ENCODE measurements at regions of chr22 and their contacts with region 1.

Region 1: DNA sequence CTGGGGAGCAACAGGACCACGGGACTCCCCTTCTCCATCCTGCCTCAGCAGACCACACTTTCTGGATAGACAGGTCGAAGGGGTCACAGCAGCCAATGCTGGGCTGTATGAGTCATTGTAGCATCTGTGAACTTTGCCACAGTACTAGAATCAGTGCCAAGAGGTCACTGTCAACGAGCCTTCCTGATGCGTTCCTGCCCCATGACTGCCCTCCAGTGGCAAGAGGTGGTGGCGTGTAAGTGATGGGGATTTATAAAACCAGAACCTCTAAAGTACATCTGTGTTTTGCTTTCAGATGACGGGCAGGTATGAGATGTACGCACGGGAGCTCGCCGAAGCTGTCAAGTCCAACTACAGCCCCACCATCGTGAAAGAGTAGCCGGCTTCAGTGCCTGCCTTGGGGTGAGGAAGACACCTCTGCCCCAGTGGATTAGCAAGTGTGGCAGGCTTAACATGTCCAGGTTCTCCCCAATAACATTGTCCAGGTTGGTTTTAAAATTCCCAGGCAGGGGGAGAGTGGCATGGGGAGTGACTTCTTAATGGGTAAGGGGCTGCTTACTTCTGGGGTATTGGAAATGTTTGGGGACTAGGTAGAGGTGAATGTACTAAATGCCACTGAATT is 29.4 kb downstream of the GUCD1 start:
- DNase-seq: peak; percentile 76 to 89 (median 84)
- H3K4me3 ChIP-seq: no peak overlapping the region
- H3K27ac ChIP-seq: no peak overlapping the region
- H3K4me1 ChIP-seq: peaks cover 0 to 9% (median 7%) of the 10 kb centered on the region in 4 experiments
- H3K27me3 ChIP-seq: no peaks in the 10 kb centered on the region

Region 2: GRCh38 chr22:24325105-24325757 is 200.3 kb before region 1 on chr22:
- CTCF ChIA-PET with region 1: interaction called, 36 read pairs
- POLR2A ChIA-PET with region 1: no interaction called
- DNase-seq: peak; percentile 87 to 95 (median 95)
- H3K4me3 ChIP-seq: peak overlapping the region in 2 of 7 experiments; percentile 23 to 40
- H3K27ac ChIP-seq: peak overlapping the region in 1 of 2 experiments; percentile 3
- H3K4me1 ChIP-seq: peaks cover 6 to 14% (median 9%) of the 10 kb centered on the region in 4 experiments
- H3K27me3 ChIP-seq: no peaks in the 10 kb centered on the region

Region 3: DNA sequence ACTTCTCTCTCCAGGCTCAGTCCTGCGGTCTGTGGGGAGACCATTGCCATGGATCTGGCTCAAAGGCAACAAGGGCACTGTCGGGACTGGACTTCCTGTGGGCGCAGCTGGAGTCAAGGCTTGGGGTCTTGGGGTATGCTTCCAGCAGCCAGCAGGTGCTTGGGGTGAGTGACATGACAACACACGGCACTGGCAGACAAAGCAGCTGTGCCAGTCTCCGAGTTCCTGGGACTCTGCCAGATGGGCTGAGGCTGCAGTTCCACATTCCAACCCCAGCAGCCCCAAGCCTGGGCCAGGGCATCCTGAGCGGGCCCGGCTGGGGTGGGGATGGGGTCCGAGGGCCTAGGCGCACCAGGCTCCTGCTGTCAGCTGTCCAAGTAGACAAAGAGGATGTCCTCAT is 17.1 kb after region 1 on chr22:
- CTCF ChIA-PET with region 1: interaction called, 73 read pairs
- POLR2A ChIA-PET with region 1: no interaction called
- DNase-seq: peak in 2 of 3 donors; percentile 61 to 65
- H3K4me3 ChIP-seq: no peak overlapping the region
- H3K27ac ChIP-seq: peak overlapping the region in 1 of 2 experiments; percentile 49
- H3K4me1 ChIP-seq: peaks cover 0 to 24% (median 19%) of the 10 kb centered on the region in 4 experiments
- H3K27me3 ChIP-seq: no peaks in the 10 kb centered on the region

Measured in common myeloid progenitor, CD34-positive (primary cell).